Right ventricle myocardium inferior (tissue), 1 donor: ENCODE measurements at regions of chr10 and their contacts with region 1.

Region 1: DNA sequence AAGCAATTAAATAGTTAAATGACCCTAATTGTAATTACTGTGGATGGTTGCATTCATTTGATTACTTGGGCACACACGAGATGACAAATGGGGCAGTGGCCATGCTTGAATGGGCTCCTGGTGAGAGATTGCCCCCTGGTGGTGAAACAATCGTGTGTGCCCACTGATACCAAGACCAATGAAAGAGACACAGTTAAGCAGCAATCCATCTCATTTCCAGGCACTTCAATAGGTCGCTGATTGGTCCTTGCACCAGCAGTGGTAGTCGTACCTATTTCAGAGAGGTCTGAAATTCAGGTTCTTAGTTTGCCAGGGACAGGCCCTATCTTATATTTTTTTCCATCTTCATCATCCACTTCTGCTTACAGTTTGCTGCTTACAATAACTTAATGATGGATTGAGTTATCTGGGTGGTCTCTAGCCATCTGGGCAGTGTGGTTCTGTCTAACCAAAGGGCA is 8.3 kb downstream of the PCBD1 start:
- DNase-seq: peak; percentile 79
- ATAC-seq: peak; percentile 67

Region 2: DNA sequence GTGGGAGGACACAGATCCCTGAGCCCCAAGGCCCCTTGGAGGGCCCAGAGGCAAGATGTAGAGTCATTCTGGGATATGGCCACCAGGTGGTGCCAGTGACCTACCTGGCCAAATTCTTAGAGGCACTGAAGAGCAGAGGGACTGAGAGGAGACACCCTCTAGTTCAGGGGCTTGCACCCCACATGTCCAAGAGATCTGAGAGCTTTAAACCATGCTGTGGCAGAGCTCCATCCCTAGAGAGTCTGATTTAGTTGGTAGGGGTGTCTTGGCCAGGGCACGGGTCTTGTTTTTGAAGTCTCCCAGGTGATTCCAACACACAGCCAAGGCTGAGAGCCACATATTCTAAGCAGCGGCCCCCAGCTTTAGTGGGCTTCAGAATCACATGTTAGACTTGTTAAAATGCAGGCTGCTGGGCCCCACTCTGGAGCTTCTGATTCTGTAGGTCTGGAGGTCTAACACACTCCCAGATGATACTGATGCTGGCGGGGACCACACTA is 330.1 kb before region 1 on chr10:
- intact Hi-C with region 1: loop called (anchors 1 kb)
- DNase-seq: no peak
- ATAC-seq: peak; percentile 70

Region 3: DNA sequence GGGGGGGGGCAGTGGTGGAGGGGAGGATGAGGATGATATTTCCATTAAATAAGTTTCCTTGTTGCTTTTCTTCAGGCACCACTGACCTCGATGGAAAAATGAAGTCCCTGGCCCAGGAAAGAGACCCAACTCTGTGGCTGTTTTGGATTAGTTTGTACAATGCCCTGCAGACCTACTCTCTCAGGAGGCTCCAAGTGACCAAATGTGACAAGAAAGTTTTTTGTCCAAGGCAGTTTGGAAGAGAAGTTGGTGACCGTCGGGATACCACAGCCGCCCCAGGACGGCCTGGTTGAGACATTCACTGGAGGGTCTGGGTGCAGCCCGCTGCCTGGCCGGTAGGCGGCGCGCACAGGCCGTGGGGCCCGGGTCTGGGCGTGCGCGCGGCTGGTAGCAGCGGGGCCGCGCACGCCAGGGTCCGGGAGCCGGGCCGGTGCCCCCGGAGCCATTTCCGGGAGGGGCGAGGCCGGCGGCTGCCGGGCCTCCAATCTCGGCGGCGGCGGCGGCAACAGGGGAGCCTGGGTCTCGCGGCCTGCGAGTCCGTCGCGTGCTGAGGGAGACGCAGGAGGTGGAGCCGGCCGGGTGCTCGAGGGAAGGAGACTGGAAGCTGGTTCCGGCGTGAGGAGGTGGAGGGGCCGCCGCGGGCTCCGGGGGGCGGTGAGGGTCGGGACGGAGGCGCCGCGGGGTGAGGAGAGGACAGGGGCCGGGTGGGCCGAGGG is 64.4 kb before region 1 on chr10 and contains the start of gene SGPL1:
- intact Hi-C with region 1: loop called (anchors 1 kb)
- DNase-seq: peak; percentile 96
- ATAC-seq: peak; percentile 98
- total RNA-seq, gene SGPL1: 13.1 TPM